HEK293 (cell line): ENCODE measurements at regions of chr15 and their contacts with region 1.

Region 1: DNA sequence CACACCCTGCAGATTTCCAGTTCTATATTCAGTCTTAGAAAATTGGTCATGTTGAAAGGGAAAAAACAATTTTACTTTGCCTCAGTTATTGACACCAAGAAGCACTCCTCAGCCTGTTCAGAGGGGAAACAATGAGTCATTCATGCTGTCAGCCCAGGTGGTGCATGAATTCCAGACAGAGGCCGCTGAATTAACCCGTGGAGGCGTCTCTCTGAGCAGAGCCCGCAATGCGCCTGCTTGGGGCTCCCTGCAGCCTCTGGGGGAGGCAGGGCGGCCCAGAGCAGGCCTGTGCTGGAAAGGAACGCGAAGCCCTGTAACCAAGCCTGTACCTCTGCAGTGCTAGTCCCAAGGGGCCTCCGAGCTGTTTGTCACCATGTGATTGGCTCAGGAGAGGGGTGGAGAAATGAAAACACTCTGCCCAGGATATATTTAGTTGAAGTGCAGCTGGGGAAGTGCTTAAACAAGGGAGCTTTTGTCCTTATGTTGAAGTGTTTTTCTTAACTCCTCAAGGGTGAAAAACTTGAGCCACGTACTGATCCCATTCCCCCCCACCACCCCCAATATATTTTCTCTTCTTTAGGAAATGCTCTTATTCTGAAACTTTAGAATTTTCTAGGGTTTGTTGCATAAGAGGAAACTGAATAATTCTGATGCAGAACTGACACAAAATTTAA is 68.3 kb upstream of the CHD2 start:
- H3K4me3 ChIP-seq: peak overlapping the region; percentile 4
- H3K27ac ChIP-seq: peak overlapping the region; percentile 89
- H3K4me1 ChIP-seq: peaks cover 29% of the 10 kb centered on the region
- CTCF ChIP-seq: no peak

Region 2: GRCh38 chr15:92655178-92655995 is 176.4 kb before region 1 on chr15 and contains the start of gene FAM174B:
- CTCF ChIA-PET with region 1: no interaction called
- POLR2A ChIA-PET with region 1: no interaction called
- H3K4me3 ChIP-seq: peak within 1 kb of the TSS; percentile 48
- H3K27ac ChIP-seq: peak within 1 kb of the TSS; percentile 68; the same call in 1 of the 2 replicates
- H3K4me1 ChIP-seq: peaks cover 3% of the 10 kb centered on the region
- CTCF ChIP-seq: no peak; the same call in none of the 2 replicates

Region 3: GRCh38 chr15:92681141-92681631 is 150.6 kb before region 1 on chr15:
- CTCF ChIA-PET with region 1: no interaction called
- POLR2A ChIA-PET with region 1: no interaction called
- H3K4me3 ChIP-seq: no peak overlapping the region
- H3K27ac ChIP-seq: no peak overlapping the region
- H3K4me1 ChIP-seq: no peaks in the 10 kb centered on the region
- CTCF ChIP-seq: no peak

Region 4: GRCh38 chr15:92733934-92734521 is 97.8 kb before region 1 on chr15:
- CTCF ChIA-PET with region 1: no interaction called
- POLR2A ChIA-PET with region 1: no interaction called
- H3K4me3 ChIP-seq: peak overlapping the region; percentile 1; the same call in 1 of the 2 replicates
- H3K27ac ChIP-seq: peak overlapping the region; percentile 54; the same call in 1 of the 2 replicates
- H3K4me1 ChIP-seq: peaks cover 4% of the 10 kb centered on the region; the same call in 1 of the 2 replicates
- CTCF ChIP-seq: no peak

Region 5: DNA sequence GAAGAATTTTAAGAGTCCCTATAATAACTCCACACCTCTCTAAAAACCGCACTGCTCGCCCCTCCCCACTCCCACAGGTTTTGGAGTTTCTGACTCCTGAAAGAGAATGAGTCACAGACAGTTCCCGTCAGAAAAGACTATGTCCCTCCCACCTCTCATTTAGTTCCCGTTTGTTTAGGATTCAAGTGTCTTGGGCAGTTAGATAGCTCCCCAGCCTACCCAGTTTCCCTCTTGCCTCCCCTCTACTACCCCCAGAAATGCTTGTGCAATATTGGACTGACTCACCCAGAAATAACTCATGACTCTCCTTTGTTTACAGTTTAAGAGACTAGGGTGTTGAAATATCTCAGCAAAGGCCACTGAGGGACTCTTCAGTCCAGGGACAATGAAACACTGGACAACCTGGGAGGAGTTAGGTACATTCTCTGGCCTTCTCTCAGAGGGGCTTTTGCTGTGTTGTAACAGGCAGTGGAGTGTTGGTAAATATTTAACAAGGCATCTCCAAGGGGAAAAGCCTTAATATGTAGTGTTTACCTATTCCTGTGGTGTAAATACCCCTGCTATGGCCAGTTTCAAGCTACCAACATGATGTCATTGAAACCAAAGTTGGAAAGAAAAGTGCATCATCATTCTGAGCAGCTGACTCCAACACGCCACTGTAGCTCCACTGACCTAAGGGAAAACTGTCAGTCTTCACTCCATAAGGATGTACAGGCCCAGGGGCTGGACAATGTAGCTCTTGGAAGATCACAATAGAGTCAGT is 27.8 kb before region 1 on chr15:
- CTCF ChIA-PET with region 1: interaction called, 6 read pairs
- POLR2A ChIA-PET with region 1: interaction called, 61 read pairs
- H3K4me3 ChIP-seq: no peak overlapping the region
- H3K27ac ChIP-seq: peak overlapping the region; percentile 78
- H3K4me1 ChIP-seq: peaks cover 8% of the 10 kb centered on the region; the same call in 1 of the 2 replicates
- CTCF ChIP-seq: no peak

Region 6: DNA sequence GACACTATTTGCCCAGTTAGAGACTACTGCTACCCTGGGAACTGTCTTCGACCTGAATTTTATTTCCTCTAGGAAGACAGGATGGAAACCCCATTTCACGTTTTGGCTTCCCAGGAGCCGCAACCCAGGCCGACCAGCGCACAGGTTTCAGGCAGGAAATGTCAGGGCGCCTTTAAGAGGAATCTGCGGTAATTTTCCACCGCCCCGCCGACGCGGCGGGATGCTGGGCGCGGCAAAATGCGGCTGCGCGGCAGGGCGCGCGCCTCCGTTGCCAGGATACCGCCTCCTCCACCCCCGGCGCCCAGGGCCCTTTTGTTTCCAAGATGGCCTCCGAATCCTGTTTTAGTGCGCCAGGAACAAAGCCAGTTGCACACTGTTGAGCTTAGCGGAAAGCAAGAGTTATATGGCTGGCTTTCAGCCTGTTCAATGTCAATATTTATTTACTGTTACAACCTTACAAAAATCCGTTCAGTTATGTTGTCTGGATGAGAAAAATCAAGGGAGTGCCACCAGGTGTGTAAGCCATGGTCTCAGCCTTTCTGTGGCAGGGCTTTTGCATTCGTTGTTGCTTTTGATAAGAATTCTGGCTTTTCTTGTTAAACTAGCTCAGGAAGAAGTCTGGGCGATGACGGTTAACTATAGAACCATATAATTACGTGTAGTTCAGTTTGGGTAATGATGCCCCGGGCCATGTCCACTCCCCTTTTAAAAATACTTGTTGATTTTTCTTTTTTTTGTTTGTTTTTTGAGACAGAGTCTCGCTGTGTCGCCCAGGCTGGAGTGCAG is 11.4 kb before region 1 on chr15:
- CTCF ChIA-PET with region 1: interaction called, 9 read pairs
- POLR2A ChIA-PET with region 1: interaction called, 103 read pairs
- H3K4me3 ChIP-seq: peak overlapping the region; percentile 39
- H3K27ac ChIP-seq: peak overlapping the region; percentile 98
- H3K4me1 ChIP-seq: peaks cover 40% of the 10 kb centered on the region
- CTCF ChIP-seq: no peak